Activated CD8-positive, alpha-beta T cell treated with anti-CD3 and anti-CD28 coated beads, Interleukin-2, amount 10 ng/mL, durations not matched to agents 7 days and 5 days (primary cell): ENCODE measurements at regions of chr4 and their contacts with region 1.

Region 1: DNA sequence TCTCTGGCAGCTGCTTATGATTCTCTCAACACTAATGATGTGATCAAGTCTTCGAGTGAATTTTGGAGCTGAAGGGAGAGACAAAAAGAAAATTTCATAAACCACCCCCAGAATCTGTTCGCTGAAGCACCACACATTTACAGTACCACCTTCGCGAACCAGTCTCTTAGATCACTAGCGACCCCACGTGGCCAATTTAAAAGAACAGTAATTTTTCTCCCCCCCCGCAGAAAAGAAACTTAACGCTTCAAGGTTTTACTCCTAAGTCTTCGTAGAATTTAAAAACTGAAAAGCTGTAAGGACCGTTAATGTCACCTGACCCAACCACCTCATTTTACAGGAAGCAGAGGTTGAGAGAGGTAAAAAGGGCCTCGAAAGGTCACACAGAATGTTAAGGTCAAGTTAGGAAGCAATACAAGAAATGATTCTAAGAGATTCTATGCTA is 187.5 kb downstream of the QDPR start:
- DNase-seq: peak; percentile 70
- ATAC-seq: peak; percentile 51
- H3K4me3 Mint-ChIP-seq: no peak overlapping the region
- H3K27ac Mint-ChIP-seq: peak overlapping the region; percentile 48
- H3K4me1 Mint-ChIP-seq: peaks cover 15% of the 10 kb centered on the region
- H3K27me3 Mint-ChIP-seq: peaks cover 3% of the 10 kb centered on the region

Region 2: DNA sequence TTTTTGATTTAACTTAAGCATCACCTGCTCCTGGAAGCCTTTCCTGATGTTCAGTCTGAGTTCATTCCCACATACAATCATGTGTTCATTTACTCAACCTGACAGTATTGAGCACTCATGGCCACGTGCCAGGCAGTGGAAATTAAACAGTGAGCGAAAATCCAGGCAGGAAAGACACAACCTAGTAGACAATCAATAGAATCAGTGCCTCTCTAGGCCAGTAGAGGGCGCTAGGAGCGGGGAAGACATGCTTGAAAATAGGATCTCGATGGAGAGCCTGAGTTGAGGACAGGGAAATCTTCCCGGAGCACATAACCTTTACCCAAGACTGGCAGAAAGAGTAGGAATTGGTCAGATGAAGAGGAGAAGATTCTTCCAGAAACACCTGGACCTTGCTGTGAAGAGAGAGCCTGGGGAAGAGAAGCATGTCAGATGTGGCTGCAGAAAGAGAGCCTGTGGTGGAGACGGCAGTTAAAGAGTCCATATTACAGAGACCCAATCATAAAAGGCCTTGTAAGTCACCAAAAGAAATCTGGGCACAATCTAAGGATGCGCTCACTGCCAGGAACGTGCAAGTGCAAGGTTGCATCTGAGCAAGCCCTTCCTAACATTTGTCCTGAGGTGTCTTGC is 529.5 kb before region 1 on chr4:
- CTCF ChIA-PET with region 1: interaction called, 14 read pairs
- POLR2A ChIA-PET with region 1: no interaction called
- DNase-seq: peak; percentile 62
- ATAC-seq: no peak
- H3K4me3 Mint-ChIP-seq: no peak overlapping the region
- H3K27ac Mint-ChIP-seq: no peak overlapping the region
- H3K4me1 Mint-ChIP-seq: no peaks in the 10 kb centered on the region
- H3K27me3 Mint-ChIP-seq: peaks cover 3% of the 10 kb centered on the region

Region 3: GRCh38 chr4:16916719-16917337 is 407.6 kb before region 1 on chr4:
- CTCF ChIA-PET with region 1: interaction called, 33 read pairs
- POLR2A ChIA-PET with region 1: no interaction called
- DNase-seq: peak; percentile 87
- ATAC-seq: peak; percentile 92
- H3K4me3 Mint-ChIP-seq: no peak overlapping the region
- H3K27ac Mint-ChIP-seq: no peak overlapping the region
- H3K4me1 Mint-ChIP-seq: peaks cover 8% of the 10 kb centered on the region
- H3K27me3 Mint-ChIP-seq: no peaks in the 10 kb centered on the region

Region 4: DNA sequence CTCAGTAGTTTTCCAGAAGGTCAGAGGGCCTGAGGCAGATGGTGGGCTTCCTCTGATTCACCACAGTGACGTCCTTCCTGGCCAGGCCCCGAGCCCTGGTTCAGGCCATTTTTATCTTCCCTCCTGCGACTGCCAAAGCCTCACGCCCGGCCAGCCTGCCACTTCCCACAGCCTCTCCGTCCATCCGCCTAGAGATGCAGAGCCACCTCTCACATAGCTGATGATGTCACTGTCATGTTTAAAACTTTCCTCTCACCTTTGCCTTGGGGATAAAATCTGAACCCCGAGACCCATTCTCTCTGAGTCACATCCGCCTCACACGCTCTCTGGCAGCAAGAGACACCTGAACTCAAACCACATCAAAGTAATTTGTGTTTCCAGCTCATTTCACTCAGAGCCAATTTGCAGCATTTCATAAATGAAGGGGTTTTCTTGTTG is 12.1 kb after region 1 on chr4:
- CTCF ChIA-PET with region 1: interaction called, 14 read pairs
- POLR2A ChIA-PET with region 1: no interaction called
- DNase-seq: peak; percentile 87
- ATAC-seq: peak; percentile 99
- H3K4me3 Mint-ChIP-seq: peak overlapping the region; percentile 32
- H3K27ac Mint-ChIP-seq: peak overlapping the region; percentile 87
- H3K4me1 Mint-ChIP-seq: peaks cover 31% of the 10 kb centered on the region
- H3K27me3 Mint-ChIP-seq: no peaks in the 10 kb centered on the region

Region 5: DNA sequence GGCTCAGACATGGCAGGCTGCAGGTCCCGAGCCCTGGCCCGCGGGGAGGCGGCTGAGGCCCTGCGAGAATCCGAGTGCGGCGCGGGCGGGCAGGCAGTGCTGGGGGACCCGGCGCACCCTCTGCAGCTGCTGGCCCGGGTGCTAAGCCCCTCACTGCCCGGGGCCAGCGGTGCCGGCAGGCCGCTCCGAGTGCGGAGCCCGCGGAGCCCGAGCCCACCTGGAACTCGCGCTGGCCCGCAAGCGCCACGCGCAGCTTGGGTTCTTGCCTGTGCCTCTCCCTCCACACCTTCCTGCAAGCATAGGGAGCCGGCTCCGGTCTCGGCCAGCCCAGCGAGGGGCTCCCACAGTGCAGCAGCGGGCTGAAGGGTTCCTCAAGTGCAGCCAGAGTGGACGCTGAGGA is 90.0 kb after region 1 on chr4:
- CTCF ChIA-PET with region 1: no interaction called
- POLR2A ChIA-PET with region 1: no interaction called
- DNase-seq: no peak
- ATAC-seq: no peak
- H3K4me3 Mint-ChIP-seq: no peak overlapping the region
- H3K27ac Mint-ChIP-seq: no peak overlapping the region
- H3K4me1 Mint-ChIP-seq: no peaks in the 10 kb centered on the region
- H3K27me3 Mint-ChIP-seq: peaks cover 6% of the 10 kb centered on the region

Region 6: GRCh38 chr4:17447675-17448298 is 123.4 kb after region 1 on chr4:
- CTCF ChIA-PET with region 1: interaction called, 24 read pairs
- POLR2A ChIA-PET with region 1: no interaction called
- DNase-seq: peak; percentile 79
- ATAC-seq: peak; percentile 98
- H3K4me3 Mint-ChIP-seq: no peak overlapping the region
- H3K27ac Mint-ChIP-seq: no peak overlapping the region
- H3K4me1 Mint-ChIP-seq: peaks cover 5% of the 10 kb centered on the region
- H3K27me3 Mint-ChIP-seq: no peaks in the 10 kb centered on the region